PC-9 (cell line): ENCODE measurements at regions of chr12 and their contacts with region 1.

Region 1: GRCh38 chr12:43282106-43282505 is 269.9 kb downstream of the ADAMTS20 start:
- DNase-seq: no peak
- H3K4me3 ChIP-seq: no peak overlapping the region
- H3K27ac ChIP-seq: no peak overlapping the region
- H3K4me1 ChIP-seq: peaks cover 20% of the 10 kb centered on the region
- H3K27me3 ChIP-seq: no peaks in the 10 kb centered on the region
- CTCF ChIP-seq: peak; percentile 79

Region 2: DNA sequence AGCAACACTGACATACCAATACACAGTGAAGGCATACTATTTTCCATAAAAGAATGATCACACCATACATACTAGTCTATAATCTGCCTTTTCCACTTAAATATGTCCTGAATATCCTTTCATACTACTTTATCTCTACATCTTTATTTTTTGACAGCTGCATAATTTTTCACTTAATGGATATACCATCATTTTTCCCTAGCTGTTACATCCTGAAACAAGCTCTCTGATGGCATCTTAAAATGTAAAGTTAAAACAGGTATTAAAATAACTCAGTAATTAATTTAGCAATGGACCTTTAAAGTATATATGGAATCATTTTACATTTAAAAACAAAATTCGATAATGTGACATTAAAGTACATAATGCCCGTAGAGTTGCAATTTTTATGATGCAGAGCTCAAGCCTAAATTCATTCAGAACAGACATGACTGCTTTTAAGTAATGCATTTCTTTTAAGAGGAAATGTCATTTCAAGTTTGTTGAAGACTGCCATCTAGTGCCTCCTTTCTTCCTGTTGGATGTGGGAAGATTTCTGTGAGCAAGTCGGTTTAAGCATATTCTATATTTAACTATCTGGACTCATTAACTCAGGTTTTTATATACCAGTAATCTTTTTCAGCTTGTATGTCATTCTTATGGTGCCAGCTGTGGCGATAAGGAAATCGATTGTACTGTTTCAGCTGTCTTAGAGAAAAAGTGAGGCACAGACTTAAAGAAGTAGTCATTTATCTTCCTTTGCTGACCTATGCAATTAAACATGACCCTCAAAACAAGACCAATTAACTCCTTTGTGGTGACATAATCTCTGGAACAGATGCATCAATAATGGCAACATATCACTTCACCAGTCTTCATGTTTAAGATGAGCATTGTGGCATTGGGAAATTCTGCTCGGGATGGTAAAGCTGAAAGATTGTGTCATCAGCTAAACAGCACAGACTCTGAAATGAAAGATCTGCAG is 712.9 kb before region 1 on chr12:
- CTCF ChIA-PET with region 1: no interaction called
- POLR2A ChIA-PET with region 1: no interaction called
- intact Hi-C with region 1: loop called (anchors 5 kb)
- DNase-seq: peak in 1 of 2 experiments; percentile 47
- H3K4me3 ChIP-seq: no peak overlapping the region
- H3K27ac ChIP-seq: peak overlapping the region; percentile 61
- H3K4me1 ChIP-seq: peaks cover 15% of the 10 kb centered on the region
- H3K27me3 ChIP-seq: no peaks in the 10 kb centered on the region
- CTCF ChIP-seq: peak; percentile 65

Region 3: DNA sequence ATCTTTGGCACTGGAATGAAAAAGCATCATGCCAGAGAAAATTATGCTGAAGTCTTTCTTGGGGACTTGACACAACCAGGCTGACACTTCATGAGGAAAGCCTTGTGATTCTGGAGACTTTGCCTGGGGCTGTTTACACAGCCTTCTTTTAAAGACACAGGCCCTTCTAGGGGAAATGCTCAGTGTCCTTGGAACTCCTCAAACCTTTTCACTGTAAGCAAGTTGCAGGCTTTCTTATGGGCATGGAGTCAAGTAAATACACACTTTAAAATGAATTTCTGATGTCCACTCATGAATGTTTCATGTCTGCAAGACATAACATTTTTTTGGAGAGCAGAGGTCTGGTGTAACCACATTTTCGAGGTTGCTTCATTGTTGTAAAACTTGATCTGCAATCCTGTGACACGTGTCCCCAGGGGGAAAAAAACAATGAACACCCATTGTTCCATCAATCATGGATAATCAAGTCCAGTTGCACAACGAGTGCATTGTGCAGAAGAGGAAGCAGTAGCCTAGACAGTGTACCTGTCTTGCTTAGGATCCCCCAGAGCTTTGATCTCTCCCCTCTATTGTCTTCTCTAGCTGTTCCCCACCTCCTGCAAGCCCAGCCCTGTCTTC is 537.5 kb before region 1 on chr12:
- CTCF ChIA-PET with region 1: no interaction called
- POLR2A ChIA-PET with region 1: no interaction called
- intact Hi-C with region 1: loop called (anchors 5 kb)
- DNase-seq: peak; percentile 49 to 90
- H3K4me3 ChIP-seq: no peak overlapping the region
- H3K27ac ChIP-seq: peak overlapping the region; percentile 35; the same call in 1 of the 2 replicates
- H3K4me1 ChIP-seq: peaks cover 27% of the 10 kb centered on the region
- H3K27me3 ChIP-seq: no peaks in the 10 kb centered on the region
- CTCF ChIP-seq: no peak

Region 4: GRCh38 chr12:42961395-42961794 is 320.7 kb before region 1 on chr12:
- CTCF ChIA-PET with region 1: no interaction called
- POLR2A ChIA-PET with region 1: no interaction called
- intact Hi-C with region 1: loop called (anchors 5 kb)
- DNase-seq: peak; percentile 63 to 99
- H3K4me3 ChIP-seq: no peak overlapping the region
- H3K27ac ChIP-seq: peak overlapping the region; percentile 91
- H3K4me1 ChIP-seq: peaks cover 38% of the 10 kb centered on the region
- H3K27me3 ChIP-seq: no peaks in the 10 kb centered on the region
- CTCF ChIP-seq: no peak

Region 5: GRCh38 chr12:44046732-44047417 is 764.8 kb after region 1 on chr12:
- CTCF ChIA-PET with region 1: no interaction called
- POLR2A ChIA-PET with region 1: no interaction called
- intact Hi-C with region 1: no loop called
- DNase-seq: no peak
- H3K4me3 ChIP-seq: no peak overlapping the region
- H3K27ac ChIP-seq: no peak overlapping the region
- H3K4me1 ChIP-seq: no peaks in the 10 kb centered on the region
- H3K27me3 ChIP-seq: no peaks in the 10 kb centered on the region
- CTCF ChIP-seq: no peak